ENCODE measurements at regions of chr17 and their contacts with region 1.

Region 1: GRCh38 chr17:74790161-74791054 is 14.3 kb upstream of the NAT9 start:
- DNase-seq: no peak
- H3K4me3 ChIP-seq: no peak overlapping the region
- H3K27ac ChIP-seq: no peak overlapping the region
- H3K4me1 ChIP-seq: no peaks in the 10 kb centered on the region
- H3K27me3 ChIP-seq: no peaks in the 10 kb centered on the region
- CTCF ChIP-seq: no peak

Region 2: DNA sequence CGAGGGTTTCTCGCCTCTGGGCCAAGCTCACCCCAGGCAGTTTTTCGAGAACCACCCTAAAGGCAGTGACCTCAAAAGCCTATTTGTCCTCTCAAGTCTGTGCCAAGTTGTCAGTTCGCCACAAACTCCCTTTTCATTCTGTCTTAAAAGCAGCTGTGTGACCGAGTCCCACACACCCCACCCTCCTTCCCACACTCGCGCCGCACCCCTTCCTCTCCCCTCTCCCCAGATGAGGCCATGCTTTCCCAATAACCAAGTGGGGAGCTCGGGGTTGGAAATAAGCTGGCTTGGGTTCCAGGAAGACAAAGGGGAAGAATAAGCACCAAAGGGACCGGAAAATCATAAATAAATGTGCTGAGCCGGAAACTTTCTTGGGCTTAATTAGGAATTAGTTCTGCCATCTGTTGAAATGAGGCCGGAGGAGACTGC is 32.5 kb after region 1 on chr17:
- CTCF ChIA-PET with region 1: no interaction called
- dilution Hi-C with region 1: no loop called
- in situ Hi-C with region 1: no loop called
- intact Hi-C with region 1: no loop called
- DNase-seq: no peak
- H3K4me3 ChIP-seq: no peak overlapping the region
- H3K27ac ChIP-seq: no peak overlapping the region
- H3K4me1 ChIP-seq: no peaks in the 10 kb centered on the region
- H3K27me3 ChIP-seq: no peaks in the 10 kb centered on the region
- CTCF ChIP-seq: no peak

Region 3: GRCh38 chr17:74842599-74843351 is 52.4 kb after region 1 on chr17:
- CTCF ChIA-PET with region 1: no interaction called
- dilution Hi-C with region 1: loop called (anchors 5 kb)
- in situ Hi-C with region 1: no loop called
- intact Hi-C with region 1: no loop called
- DNase-seq: no peak
- H3K4me3 ChIP-seq: peak overlapping the region in 2 of 3 experiments; percentile 28 to 41
- H3K27ac ChIP-seq: no peak overlapping the region
- H3K4me1 ChIP-seq: peaks cover 10% of the 10 kb centered on the region
- H3K27me3 ChIP-seq: no peaks in the 10 kb centered on the region
- CTCF ChIP-seq: peak; percentile 13 to 54

Region 4: GRCh38 chr17:74873038-74873873 is 82.8 kb after region 1 on chr17:
- CTCF ChIA-PET with region 1: no interaction called
- dilution Hi-C with region 1: loop called (anchors 5 kb)
- in situ Hi-C with region 1: loop called (anchors 10 kb)
- intact Hi-C with region 1: no loop called
- DNase-seq: peak; percentile 100
- H3K4me3 ChIP-seq: peak overlapping the region; percentile 85 to 97 (median 90)
- H3K27ac ChIP-seq: peak overlapping the region; percentile 96
- H3K4me1 ChIP-seq: peaks cover 21% of the 10 kb centered on the region
- H3K27me3 ChIP-seq: no peaks in the 10 kb centered on the region
- CTCF ChIP-seq: no peak